Calu3 (cell line): ENCODE measurements at regions of chr4 and their contacts with region 1.

Region 1: GRCh38 chr4:105666693-105667092 is 41.8 kb downstream of the INTS12 start:
- DNase-seq: no peak
- H3K4me3 Mint-ChIP-seq: no peak overlapping the region
- H3K27ac Mint-ChIP-seq: no peak overlapping the region
- H3K4me1 Mint-ChIP-seq: no peaks in the 10 kb centered on the region
- H3K27me3 Mint-ChIP-seq: no peaks in the 10 kb centered on the region
- CTCF ChIP-seq: no peak

Region 2: DNA sequence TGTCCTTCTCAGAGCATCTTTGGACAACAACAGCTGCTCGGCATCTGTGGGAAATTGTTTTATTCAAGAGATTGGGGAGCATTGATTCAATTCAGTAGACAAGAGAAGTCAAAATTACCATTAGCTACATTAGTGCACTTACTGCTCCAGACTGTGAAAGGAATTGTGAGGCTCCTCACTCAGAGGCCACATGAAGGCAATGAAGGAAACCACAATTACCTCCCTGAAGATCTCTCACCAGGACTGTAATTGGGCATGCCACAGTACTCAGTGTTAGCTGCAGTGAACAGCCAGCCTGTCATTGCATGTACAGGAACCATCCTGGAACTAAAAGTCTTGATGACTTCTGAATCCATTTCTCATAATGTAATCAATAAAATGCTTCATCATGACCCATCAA is 337.6 kb before region 1 on chr4:
- CTCF ChIA-PET with region 1: no interaction called
- intact Hi-C with region 1: loop called (anchors 5 kb)
- DNase-seq: no peak
- H3K4me3 Mint-ChIP-seq: no peak overlapping the region
- H3K27ac Mint-ChIP-seq: no peak overlapping the region
- H3K4me1 Mint-ChIP-seq: no peaks in the 10 kb centered on the region
- H3K27me3 Mint-ChIP-seq: no peaks in the 10 kb centered on the region
- CTCF ChIP-seq: no peak

Region 3: GRCh38 chr4:105496899-105497298 is 169.8 kb before region 1 on chr4:
- CTCF ChIA-PET with region 1: no interaction called
- intact Hi-C with region 1: loop called (anchors 5 kb)
- DNase-seq: peak; percentile 15
- H3K4me3 Mint-ChIP-seq: no peak overlapping the region
- H3K27ac Mint-ChIP-seq: no peak overlapping the region
- H3K4me1 Mint-ChIP-seq: no peaks in the 10 kb centered on the region
- H3K27me3 Mint-ChIP-seq: no peaks in the 10 kb centered on the region
- CTCF ChIP-seq: no peak

Region 4: GRCh38 chr4:105520817-105521790 is 145.6 kb before region 1 on chr4:
- CTCF ChIA-PET with region 1: interaction called, 8 read pairs
- intact Hi-C with region 1: loop called (anchors 2 kb)
- DNase-seq: peak; percentile 55
- H3K4me3 Mint-ChIP-seq: no peak overlapping the region
- H3K27ac Mint-ChIP-seq: no peak overlapping the region
- H3K4me1 Mint-ChIP-seq: no peaks in the 10 kb centered on the region
- H3K27me3 Mint-ChIP-seq: no peaks in the 10 kb centered on the region
- CTCF ChIP-seq: peak; percentile 55

Region 5: DNA sequence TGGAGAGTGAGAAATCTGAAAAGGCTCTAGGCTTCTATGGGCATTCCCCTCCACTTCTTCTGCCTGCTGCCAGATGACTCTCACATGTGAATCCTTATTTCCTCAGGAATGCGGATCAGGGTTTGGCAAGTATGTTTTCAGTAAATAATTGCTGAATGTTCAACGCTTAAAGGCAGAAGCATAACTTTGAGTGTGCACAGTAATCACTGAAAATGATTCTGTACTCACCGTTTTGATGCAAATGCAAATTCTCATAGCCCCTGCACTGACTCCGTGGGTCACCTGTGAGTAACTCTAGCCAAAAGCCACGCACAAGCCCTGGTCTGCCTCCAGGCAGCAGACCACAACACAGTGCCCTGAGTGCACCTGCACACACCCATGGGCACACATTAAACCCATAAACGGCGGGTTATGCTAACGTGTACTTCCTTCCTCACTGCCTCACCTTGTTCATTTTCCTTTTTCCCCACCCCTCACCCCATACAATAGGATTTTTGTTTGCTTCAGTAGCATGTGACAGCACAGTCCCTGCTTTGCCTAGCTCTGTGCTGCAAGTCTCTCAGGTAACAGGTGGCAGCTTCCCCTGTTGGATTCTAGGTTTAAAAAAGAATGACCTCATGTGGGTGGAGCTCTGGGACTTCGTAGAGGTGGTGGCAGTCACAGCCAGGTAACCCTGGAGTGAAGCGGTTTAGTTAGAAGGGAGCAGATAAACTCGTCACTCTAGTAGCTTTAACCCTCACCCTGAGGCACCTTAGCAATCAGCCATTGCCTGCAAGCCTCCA is 114.5 kb before region 1 on chr4 and contains the start of gene ARHGEF38:
- CTCF ChIA-PET with region 1: no interaction called
- intact Hi-C with region 1: loop called (anchors 10 kb)
- DNase-seq: peak; percentile 80
- H3K4me3 Mint-ChIP-seq: peak within 1 kb of the TSS; percentile 76
- H3K27ac Mint-ChIP-seq: peak within 1 kb of the TSS; percentile 91
- H3K4me1 Mint-ChIP-seq: peaks cover 33% of the 10 kb centered on the region
- H3K27me3 Mint-ChIP-seq: no peaks in the 10 kb centered on the region
- CTCF ChIP-seq: no peak
- total RNA-seq, gene ARHGEF38: 16.6 and 22.8 TPM in 2 replicates